ENCODE measurements at regions of chr1 and their contacts with region 1.

Region 1: GRCh38 chr1:184982002-184982954 is 8.0 kb upstream of the NIBAN1 start:
- DNase-seq: peak; percentile 42
- ATAC-seq: peak; percentile 98
- H3K4me3 ChIP-seq: no peak overlapping the region
- H3K27ac ChIP-seq: no peak overlapping the region
- H3K4me1 ChIP-seq: no peaks in the 10 kb centered on the region
- H3K27me3 ChIP-seq: no peaks in the 10 kb centered on the region
- CTCF ChIP-seq: peak; percentile 82
- EP300 ChIP-seq: no peak
- POLR2A ChIP-seq: no peak
- RAD21 ChIP-seq: peak; percentile 59

Region 2: DNA sequence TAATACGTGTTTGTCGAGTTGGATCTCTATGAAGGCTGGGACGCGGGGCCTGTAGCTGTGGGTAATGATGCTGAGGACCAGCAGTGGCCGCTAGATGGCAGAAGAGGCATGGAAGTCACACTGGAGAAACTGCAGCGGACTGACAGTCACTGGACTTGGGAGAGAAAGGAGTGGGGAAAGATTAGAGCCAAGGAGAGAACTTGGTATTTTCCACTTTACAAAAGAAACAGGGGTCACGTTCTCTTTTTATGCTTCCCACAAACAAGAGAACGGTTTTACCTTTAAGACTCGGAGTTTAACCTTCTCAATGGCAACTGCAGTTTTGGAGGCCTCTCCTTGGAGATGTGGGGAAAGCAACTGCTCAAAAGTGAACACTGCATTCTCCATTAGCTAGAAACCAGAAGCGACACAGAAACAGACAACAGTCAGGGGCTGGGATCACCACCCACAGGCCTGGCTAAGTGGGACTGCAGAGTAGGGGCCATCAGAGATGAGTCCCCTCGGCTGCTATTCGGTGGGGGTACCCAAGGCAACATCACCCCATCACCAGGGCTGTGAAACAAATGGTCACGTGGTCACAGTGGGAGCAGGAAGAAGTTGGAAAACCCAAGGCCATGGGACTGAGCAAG is 176.5 kb before region 1 on chr1:
- CTCF ChIA-PET with region 1: interaction called, 51 read pairs
- POLR2A ChIA-PET with region 1: no interaction called
- in situ Hi-C with region 1: loop called (anchors 5 kb)
- intact Hi-C with region 1: loop called (anchors 1 kb)
- DNase-seq: peak; percentile 65
- ATAC-seq: peak; percentile 100
- H3K4me3 ChIP-seq: no peak overlapping the region
- H3K27ac ChIP-seq: no peak overlapping the region
- H3K4me1 ChIP-seq: peaks cover 9% of the 10 kb centered on the region
- H3K27me3 ChIP-seq: 0 out of 5 replicates have a peak, but pooled peaks cover 0 to 3% of the 10 kb centered on the region in 2 experiments
- CTCF ChIP-seq: peak; percentile 95
- EP300 ChIP-seq: no peak
- POLR2A ChIP-seq: no peak
- RAD21 ChIP-seq: peak; percentile 86

Measured in HepG2 (cell line).